ENCODE measurements at regions of chr4 and their contacts with region 1.

Region 1: GRCh38 chr4:6546681-6547447 is 28.1 kb upstream of the MAN2B2 start:
- DNase-seq: peak; percentile 37
- ATAC-seq: peak in 1 of 2 donors; percentile 46

Region 2: GRCh38 chr4:6338175-6338950 is 208.5 kb before region 1 on chr4:
- intact Hi-C with region 1: loop called (anchors 5 kb)
- DNase-seq: no peak
- ATAC-seq: no peak

Region 3: DNA sequence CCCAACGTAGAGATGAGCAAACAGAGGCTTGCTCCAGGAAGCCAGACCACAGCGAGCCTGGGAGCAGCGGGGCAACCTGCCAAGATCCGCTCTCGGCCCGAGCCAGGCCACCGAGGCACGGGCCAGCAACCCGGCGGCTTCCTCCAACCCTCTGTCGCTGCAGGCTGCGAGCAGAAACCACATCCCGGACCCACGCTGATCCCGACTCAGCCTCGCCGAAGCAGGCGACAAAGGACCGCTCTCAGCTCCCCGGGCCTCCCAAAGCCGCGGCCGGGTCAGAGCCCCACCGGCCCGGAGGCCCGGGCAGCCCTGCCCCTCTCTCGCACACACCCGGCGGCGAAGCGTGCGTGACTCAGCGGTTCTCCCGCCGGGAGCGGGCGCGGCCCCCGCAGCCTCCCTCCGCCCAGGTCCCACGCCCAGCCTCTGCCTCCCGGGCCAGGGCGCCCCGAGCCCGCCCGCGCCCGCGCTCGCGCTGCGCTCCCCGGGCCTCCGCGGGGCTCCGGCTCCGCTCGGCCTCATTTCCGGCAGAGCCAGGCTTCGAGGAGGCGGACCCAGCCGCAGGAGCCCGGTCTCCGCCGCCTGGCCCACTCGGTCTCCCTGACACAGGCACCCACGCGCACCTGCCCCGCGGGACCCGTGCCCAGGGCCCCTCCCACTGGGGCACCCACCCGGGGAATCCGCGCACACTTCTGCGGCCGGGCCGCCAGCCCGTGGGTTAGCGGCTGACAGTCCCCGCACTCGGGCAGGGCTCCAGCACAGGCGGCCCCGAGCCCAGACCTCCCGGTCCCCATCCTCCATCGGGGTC is 76.2 kb before region 1 on chr4:
- intact Hi-C with region 1: loop called in 1 of 2 experiments (anchors 2 kb)
- DNase-seq: peak; percentile 78
- ATAC-seq: peak; percentile 53 to 92

Region 4: GRCh38 chr4:6500481-6501140 is 46.3 kb before region 1 on chr4:
- intact Hi-C with region 1: no loop called
- DNase-seq: no peak
- ATAC-seq: no peak